Sigmoid colon (tissue), 7 donors: ENCODE measurements at regions of chr2 and their contacts with region 1.

Region 1: GRCh38 chr2:18520451-18521425 is 39.7 kb downstream of the RDH14 start:
- DNase-seq: peak; percentile 93
- H3K4me3 ChIP-seq: no peak overlapping the region
- H3K27ac ChIP-seq: peak overlapping the region; percentile 57 to 78 (median 73)
- H3K4me1 ChIP-seq: peaks cover 0 to 50% (median 48%) of the 10 kb centered on the region in 4 donors
- H3K27me3 ChIP-seq: no peaks in the 10 kb centered on the region
- CTCF ChIP-seq: peak; percentile 81 to 91 (median 88)
- EP300 ChIP-seq: no peak
- POLR2A ChIP-seq: no peak

Region 2: GRCh38 chr2:18387441-18388206 is 133.1 kb before region 1 on chr2:
- intact Hi-C with region 1: loop called (anchors 2 kb)
- DNase-seq: peak; percentile 91
- H3K4me3 ChIP-seq: no peak overlapping the region
- H3K27ac ChIP-seq: peak overlapping the region; percentile 51 to 71 (median 64)
- H3K4me1 ChIP-seq: no peaks in the 10 kb centered on the region
- H3K27me3 ChIP-seq: no peaks in the 10 kb centered on the region
- CTCF ChIP-seq: peak; percentile 82 to 99 (median 90)
- EP300 ChIP-seq: no peak
- POLR2A ChIP-seq: no peak

Region 3: GRCh38 chr2:18435421-18436037 is 85.2 kb before region 1 on chr2:
- intact Hi-C with region 1: loop called (anchors 5 kb)
- DNase-seq: no peak
- H3K4me3 ChIP-seq: no peak overlapping the region
- H3K27ac ChIP-seq: peak overlapping the region in 2 of 4 donors; percentile 23 to 28
- H3K4me1 ChIP-seq: peaks cover 0 to 37% (median 23%) of the 10 kb centered on the region in 4 donors
- H3K27me3 ChIP-seq: no peaks in the 10 kb centered on the region
- CTCF ChIP-seq: peak in 3 of 4 experiments; percentile 14 to 53 (median 22)
- EP300 ChIP-seq: no peak
- POLR2A ChIP-seq: no peak

Region 4: GRCh38 chr2:18560031-18560796 is 39.5 kb after region 1 on chr2 and contains the start of gene RDH14:
- intact Hi-C with region 1: loop called (anchors 2 kb)
- DNase-seq: peak; percentile 98
- H3K4me3 ChIP-seq: peak within 1 kb of the TSS; percentile 73 to 88 (median 78)
- H3K27ac ChIP-seq: peak within 1 kb of the TSS; percentile 95 to 99 (median 96)
- H3K4me1 ChIP-seq: peaks cover 0 to 32% (median 21%) of the 10 kb centered on the region in 4 donors
- H3K27me3 ChIP-seq: no peaks in the 10 kb centered on the region
- CTCF ChIP-seq: no peak
- EP300 ChIP-seq: no peak
- POLR2A ChIP-seq: peak; percentile 42 to 53
- total RNA-seq, gene RDH14: 37.5 to 45.7 (median 39.9) TPM

Region 5: DNA sequence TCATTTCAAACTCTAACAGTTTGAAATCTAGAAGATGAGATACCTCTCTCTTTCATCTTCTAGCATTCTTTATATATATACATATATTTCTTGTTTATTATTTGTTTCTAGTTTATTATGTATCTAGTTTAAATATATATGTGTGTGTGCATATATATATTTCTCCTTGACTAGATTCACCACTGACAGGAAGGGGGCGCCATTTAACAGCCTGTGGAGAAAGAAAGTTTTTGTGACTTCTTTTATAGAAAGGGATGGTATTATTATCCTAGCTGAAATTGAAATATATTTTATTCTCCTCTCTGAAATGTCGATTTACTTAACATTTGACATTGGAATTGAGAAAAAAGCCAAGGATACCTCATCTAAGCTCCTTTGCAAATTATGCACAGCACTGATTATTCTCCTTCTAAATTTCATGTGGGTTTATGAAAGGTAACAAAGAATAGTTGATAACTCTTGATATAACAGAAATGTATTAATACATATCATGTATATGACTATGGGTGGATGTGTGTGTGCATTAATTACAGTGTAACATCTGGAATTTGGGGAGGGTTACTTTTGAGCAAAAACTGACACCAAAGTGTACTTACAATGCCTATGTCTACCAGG is 229.3 kb after region 1 on chr2:
- intact Hi-C with region 1: loop called (anchors 2 kb)
- DNase-seq: peak; percentile 77
- H3K4me3 ChIP-seq: no peak overlapping the region
- H3K27ac ChIP-seq: no peak overlapping the region
- H3K4me1 ChIP-seq: peaks cover 0 to 11% (median 5%) of the 10 kb centered on the region in 4 donors
- H3K27me3 ChIP-seq: no peaks in the 10 kb centered on the region
- CTCF ChIP-seq: peak; percentile 53 to 84 (median 72)
- EP300 ChIP-seq: no peak
- POLR2A ChIP-seq: no peak

Region 6: GRCh38 chr2:19033240-19033639 is 512.5 kb after region 1 on chr2:
- intact Hi-C with region 1: no loop called
- DNase-seq: no peak
- H3K4me3 ChIP-seq: no peak overlapping the region
- H3K27ac ChIP-seq: no peak overlapping the region
- H3K4me1 ChIP-seq: peaks cover 0 to 4% (median 4%) of the 10 kb centered on the region in 4 donors
- H3K27me3 ChIP-seq: no peaks in the 10 kb centered on the region
- CTCF ChIP-seq: no peak
- EP300 ChIP-seq: no peak
- POLR2A ChIP-seq: no peak

Region 7: GRCh38 chr2:19863303-19864041 is 1342.7 kb after region 1 on chr2:
- intact Hi-C with region 1: loop called (anchors 2 kb)
- DNase-seq: peak; percentile 82
- H3K4me3 ChIP-seq: peak overlapping the region in 1 of 4 donors; percentile 5
- H3K27ac ChIP-seq: no peak overlapping the region
- H3K4me1 ChIP-seq: peaks cover 0 to 23% (median 9%) of the 10 kb centered on the region in 4 donors
- H3K27me3 ChIP-seq: peaks cover 0 to 8% (median 0%) of the 10 kb centered on the region in 3 donors
- CTCF ChIP-seq: peak; percentile 93 to 98 (median 96)
- EP300 ChIP-seq: no peak
- POLR2A ChIP-seq: no peak